ENCODE measurements at regions of chr1 and their contacts with region 1.

Region 1: GRCh38 chr1:28602536-28603439 is 10.7 kb downstream of the RAB42 start:
- DNase-seq: peak; percentile 48
- CTCF ChIP-seq: peak; percentile 73

Region 2: DNA sequence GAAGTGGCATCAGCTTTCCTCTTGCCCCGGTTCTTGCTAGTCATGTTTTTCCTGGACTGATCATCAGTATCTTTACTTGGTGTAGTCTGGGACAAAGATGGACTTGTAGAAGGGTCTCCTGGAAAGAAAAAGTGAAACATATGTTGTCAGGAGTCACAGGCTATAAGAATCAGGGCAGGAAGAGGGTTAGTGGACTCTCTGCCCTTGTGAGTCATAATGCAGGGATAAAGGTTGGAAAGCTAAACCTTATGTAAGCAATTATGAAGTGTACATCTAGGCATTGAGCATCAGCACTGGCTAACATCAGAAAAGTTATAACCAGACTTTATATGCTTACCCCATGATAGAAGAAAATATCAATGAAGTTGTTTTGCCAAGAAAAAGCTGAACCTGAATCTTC is 591.8 kb before region 1 on chr1:
- in situ Hi-C with region 1: no loop called
- DNase-seq: no peak
- CTCF ChIP-seq: no peak

Region 3: GRCh38 chr1:28417429-28417922 is 185.3 kb before region 1 on chr1:
- in situ Hi-C with region 1: loop called (anchors 25 kb)
- DNase-seq: peak; percentile 19
- CTCF ChIP-seq: no peak

Region 4: DNA sequence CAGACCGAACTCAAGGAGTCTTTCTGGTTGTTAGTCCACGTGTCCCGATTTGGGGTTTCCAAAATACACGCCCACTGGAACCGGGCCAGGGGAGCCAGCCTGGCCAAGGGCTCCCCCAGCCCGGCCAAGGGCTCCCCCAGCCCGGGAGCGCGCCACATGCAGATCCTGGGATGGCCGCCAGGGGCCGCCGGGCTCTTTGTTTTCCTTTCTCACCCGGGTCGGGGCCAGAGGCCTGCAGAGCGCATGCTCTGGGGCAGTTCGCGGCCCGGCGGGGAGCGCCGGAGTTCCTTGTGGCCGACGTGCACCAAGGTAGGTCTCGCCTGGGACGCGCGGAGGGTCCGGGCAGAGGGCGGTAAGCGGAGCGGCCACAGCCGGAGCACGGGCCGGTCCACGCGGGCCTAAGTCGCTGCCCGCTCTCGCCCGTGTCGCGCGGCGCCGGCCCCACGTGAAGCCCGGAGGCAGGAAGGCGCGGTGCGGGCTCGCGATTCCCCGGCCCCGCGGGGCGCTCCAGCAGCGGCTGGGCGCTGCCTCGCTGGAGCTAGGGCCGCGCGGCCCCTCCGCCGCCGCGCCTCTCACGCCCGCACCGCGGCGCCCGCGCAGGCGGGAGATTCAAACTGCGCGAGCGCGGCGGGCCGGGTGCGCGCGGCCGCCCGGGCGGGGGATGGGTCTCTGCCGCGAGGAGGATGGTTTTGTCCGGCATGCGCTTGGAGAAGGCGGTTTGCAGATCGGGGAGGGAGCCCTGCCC is 84.6 kb before region 1 on chr1:
- in situ Hi-C with region 1: loop called (anchors 10 kb)
- DNase-seq: peak; percentile 89
- CTCF ChIP-seq: peak; percentile 93

Measured in GM13977 (cell line).